ENCODE measurements at regions of chr3 and their contacts with region 1.

Region 1: DNA sequence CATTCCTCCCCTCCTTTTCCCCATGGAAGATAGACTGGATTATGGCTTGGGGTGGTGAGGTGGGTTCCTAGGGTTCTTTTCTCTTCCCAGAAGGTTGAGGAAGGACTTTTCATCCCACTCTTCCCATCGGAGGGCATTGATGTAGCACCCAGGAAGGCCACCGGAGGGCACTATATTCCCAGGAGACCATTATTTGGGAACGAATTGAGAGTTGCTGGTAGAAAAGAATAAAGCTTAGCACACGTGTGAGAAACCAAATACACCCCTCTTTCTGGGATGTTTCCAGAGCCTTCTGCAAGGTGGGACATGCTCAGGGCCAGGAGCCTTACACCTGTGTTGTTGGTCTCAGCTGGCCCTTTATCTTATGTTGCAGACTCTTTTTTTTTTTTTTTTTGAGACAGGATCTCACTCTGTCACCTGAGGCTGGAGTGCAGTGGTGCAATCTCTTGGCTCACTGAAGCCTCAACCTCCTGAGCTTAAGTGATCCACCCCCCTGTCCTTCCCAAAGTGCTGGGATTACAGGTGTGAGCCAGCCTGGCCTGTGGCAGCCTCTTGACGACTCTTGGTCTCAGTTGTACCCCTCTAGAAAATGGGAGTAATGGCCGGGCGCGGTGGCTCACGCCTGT is 6.3 kb upstream of the CDC25A start:
- DNase-seq: peak; percentile 55 to 75
- H3K4me3 ChIP-seq: no peak overlapping the region
- H3K27ac ChIP-seq: no peak overlapping the region
- H3K4me1 ChIP-seq: no peaks in the 10 kb centered on the region
- H3K27me3 ChIP-seq: no peaks in the 10 kb centered on the region
- CTCF ChIP-seq: peak; percentile 84

Region 2: DNA sequence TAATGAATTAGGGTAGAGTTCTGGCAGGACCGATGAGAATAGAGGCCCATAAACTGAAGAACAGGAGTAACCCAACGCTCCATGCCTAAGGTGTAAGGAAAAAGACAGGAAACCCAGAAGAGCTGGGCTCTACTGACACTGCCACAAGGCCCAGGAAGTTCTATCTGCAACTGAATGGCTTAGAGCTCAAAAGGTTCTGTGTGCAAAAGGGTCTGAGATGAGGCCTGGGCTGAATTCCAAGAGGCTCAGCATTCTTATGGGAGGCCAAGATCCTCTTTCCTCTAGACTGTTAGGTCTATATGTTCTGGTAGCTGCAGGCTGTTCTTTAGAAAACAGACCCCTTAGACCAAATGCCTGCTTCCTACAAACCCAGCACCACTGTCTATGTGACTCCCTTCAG is 1446.4 kb before region 1 on chr3:
- CTCF ChIA-PET with region 1: no interaction called
- POLR2A ChIA-PET with region 1: no interaction called
- intact Hi-C with region 1: no loop called
- DNase-seq: no peak
- H3K4me3 ChIP-seq: no peak overlapping the region
- H3K27ac ChIP-seq: no peak overlapping the region
- H3K4me1 ChIP-seq: no peaks in the 10 kb centered on the region
- H3K27me3 ChIP-seq: no peaks in the 10 kb centered on the region
- CTCF ChIP-seq: no peak

Region 3: GRCh38 chr3:48273594-48274211 is 79.1 kb after region 1 on chr3:
- CTCF ChIA-PET with region 1: interaction called, 9 read pairs
- POLR2A ChIA-PET with region 1: no interaction called
- intact Hi-C with region 1: loop called (anchors 1 kb)
- DNase-seq: peak; percentile 44 to 53
- H3K4me3 ChIP-seq: no peak overlapping the region
- H3K27ac ChIP-seq: no peak overlapping the region
- H3K4me1 ChIP-seq: peaks cover 19% of the 10 kb centered on the region
- H3K27me3 ChIP-seq: no peaks in the 10 kb centered on the region
- CTCF ChIP-seq: peak; percentile 81

Region 4: GRCh38 chr3:48429317-48429959 is 234.9 kb after region 1 on chr3:
- CTCF ChIA-PET with region 1: interaction called, 3 read pairs
- POLR2A ChIA-PET with region 1: interaction called, 11 read pairs
- intact Hi-C with region 1: no loop called
- DNase-seq: peak; percentile 42 to 92
- H3K4me3 ChIP-seq: peak overlapping the region; percentile 73
- H3K27ac ChIP-seq: peak overlapping the region; percentile 61
- H3K4me1 ChIP-seq: peaks cover 43% of the 10 kb centered on the region
- H3K27me3 ChIP-seq: no peaks in the 10 kb centered on the region
- CTCF ChIP-seq: no peak

Region 5: DNA sequence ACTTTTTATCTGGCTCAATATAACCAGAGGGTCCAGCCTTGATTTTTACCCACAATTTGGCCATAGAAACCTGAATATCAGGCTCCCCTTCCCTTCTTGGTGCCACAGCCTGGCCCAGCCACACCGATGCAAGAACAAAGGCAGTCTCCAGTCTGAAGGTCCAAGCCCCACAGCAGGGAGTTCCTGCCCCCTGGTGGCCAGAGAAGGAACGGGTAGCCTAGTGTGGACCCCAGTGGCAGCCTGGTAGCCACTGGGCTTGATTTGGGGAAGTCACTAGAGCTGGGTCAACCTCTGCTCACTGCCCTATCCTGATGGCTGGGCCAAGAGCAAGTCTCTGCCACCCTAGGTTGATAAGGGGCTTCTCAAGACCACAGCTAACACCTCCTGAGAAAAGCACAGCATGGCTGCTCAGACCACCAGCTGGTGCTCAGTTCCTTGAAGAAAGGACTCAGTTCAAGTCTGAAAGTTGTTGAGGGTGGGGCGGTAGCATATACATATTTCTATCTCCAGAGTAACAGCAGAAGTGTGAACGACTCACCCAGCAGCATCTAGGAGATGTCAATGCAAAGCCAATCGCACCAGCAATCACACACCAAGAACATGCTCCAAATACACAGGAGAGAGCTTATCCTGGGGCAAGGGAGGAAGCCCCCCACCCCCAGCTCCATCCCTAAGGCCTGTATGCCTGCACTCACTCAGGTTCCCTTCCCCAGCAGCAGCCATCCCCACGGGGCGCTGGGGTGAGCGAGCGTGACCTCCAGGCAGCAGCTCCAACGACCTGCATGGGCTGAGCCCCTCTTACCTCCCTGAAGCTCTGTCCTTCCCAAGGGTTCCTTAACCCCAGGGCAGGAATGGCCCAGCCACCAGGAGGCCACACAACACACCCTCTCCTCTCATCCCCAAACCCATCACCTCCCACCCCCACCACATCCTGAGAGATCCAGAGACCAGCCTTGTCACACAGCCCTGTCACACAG is 354.5 kb after region 1 on chr3:
- CTCF ChIA-PET with region 1: no interaction called
- POLR2A ChIA-PET with region 1: no interaction called
- intact Hi-C with region 1: loop called (anchors 5 kb)
- DNase-seq: peak; percentile 56 to 84
- H3K4me3 ChIP-seq: no peak overlapping the region
- H3K27ac ChIP-seq: no peak overlapping the region
- H3K4me1 ChIP-seq: 0 out of 2 replicates have a peak, but pooled peaks cover 3% of the 10 kb centered on the region
- H3K27me3 ChIP-seq: no peaks in the 10 kb centered on the region
- CTCF ChIP-seq: peak; percentile 90

Measured in PC-9 (cell line).